ENCODE measurements at regions of chr16 and their contacts with region 1.

Region 1: DNA sequence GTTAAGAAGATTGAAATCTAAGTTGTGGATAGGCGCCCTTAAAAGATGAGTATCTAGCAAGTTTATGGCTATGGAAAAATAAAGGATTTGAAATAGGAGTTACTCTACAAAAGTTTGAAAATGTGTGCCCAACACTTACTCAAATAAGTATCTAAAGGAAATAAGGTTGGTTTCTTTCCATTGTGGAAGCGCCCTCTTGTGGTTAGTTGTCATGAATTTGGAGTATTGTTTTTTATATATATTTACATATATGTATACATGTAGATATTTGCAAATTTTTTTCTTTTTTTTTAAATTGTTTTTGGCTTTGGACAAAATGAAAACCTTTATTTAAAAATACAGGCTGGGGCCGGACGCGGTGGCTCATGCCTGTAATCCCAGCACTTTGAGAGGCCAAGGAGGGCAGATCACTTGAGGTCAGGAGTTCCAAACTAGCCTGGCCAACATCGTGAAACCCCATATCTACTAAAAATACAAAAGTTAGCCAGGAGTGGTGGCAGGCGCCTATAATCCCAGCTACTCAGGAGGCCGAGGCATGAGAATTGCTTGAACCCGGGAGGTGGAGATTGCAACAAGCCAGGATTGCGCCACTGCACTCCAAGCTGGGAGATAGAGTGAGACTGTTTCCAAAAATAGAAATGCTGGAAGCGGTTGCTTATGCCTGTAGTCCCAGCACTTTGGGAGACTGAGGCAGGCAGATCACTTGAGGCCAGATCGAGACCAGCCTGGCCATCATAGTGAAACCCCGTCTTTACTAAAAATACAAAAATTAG is 24.0 kb upstream of the VPS4A start:
- DNase-seq: peak; percentile 67
- H3K4me3 ChIP-seq: no peak overlapping the region
- H3K27ac ChIP-seq: no peak overlapping the region
- H3K4me1 ChIP-seq: no peaks in the 10 kb centered on the region
- H3K27me3 ChIP-seq: no peaks in the 10 kb centered on the region
- CTCF ChIP-seq: peak; percentile 49 to 85 (median 74)
- POLR2A ChIP-seq: no peak

Region 2: DNA sequence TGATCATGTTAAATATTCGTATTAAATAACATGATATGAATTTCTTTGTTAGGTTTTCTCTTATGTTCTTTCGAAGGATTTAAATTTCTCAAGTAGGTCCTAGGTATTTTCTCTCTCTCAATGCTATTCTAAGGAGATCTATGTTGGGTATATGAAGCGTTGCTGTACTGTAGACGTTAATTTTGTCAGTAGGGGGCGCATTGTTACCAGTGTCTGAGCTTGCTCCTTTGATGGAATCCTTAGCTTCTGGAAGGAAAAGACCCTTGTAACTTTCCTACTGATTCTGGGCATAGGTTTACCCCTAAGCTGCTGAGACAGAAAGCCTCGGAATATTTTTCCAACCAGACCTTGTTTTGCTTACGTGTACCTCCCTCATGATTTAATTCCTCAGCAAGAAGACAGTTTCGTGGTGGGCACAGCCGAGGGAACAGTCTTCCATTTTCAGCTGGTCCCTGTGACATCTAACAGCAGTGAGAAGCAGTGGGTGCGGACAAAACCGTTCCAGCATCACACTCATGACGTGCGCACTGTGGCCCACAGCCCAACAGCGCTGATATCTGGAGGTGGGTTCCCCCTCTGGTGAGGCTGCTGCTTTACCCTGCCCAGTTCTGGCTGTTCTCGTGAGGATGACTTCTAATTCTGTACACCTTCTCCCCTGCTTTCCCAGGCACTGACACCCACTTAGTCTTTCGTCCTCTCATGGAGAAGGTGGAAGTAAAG is 136.8 kb before region 1 on chr16:
- intact Hi-C with region 1: loop called (anchors 1 kb)
- DNase-seq: peak; percentile 73
- H3K4me3 ChIP-seq: no peak overlapping the region
- H3K27ac ChIP-seq: no peak overlapping the region
- H3K4me1 ChIP-seq: no peaks in the 10 kb centered on the region
- H3K27me3 ChIP-seq: no peaks in the 10 kb centered on the region
- CTCF ChIP-seq: peak; percentile 35 to 87 (median 84)
- POLR2A ChIP-seq: no peak

Region 3: GRCh38 chr16:69410285-69410990 is 123.3 kb after region 1 on chr16:
- intact Hi-C with region 1: no loop called
- DNase-seq: no peak
- H3K4me3 ChIP-seq: no peak overlapping the region
- H3K27ac ChIP-seq: peak overlapping the region; percentile 44 to 51
- H3K4me1 ChIP-seq: no peaks in the 10 kb centered on the region
- H3K27me3 ChIP-seq: no peaks in the 10 kb centered on the region
- CTCF ChIP-seq: no peak
- POLR2A ChIP-seq: no peak

Measured in prostate gland (tissue), 2 donors.